Heart left ventricle (tissue), 16 donors: ENCODE measurements at regions of chrX and their contacts with region 1.

Region 1: DNA sequence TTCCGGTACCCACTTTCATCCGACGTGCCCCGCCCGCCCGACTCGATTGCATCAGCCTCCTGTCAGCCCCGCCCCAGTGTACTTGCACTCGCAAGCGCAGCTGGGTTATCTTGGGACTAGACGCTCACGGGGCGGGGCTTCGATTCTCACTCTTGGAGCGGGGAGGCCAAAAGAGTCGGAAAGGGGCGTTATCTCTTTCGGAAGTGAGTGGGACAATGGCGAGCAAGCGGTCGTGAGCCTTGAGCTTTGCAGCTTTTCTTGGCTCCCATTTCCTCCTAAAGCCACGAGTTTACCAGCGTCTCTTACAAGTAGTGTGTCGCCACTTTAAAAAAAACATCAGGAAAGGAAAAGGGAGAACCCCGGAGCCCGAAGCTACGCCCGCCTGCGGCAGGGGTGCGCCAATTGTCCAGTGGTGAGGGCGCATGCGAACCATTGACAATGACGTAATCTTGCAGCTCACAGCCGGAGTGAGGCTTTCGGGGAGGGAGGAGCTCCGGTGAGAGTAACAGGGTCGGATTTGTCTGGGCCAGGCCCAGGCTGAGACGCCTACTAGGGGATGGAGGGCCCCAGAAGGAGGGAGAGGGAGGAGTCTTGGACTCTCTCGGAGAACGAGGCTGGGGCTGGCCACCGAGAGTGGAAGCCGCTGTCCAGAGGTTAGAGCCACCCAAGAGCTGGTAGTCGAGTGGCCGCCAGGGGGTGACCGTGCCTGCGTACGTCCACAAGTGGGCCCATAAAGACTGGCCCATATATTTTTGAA is 109.5 kb downstream of the GNL3L start:
- DNase-seq: peak; percentile 93 to 97 (median 95)
- ATAC-seq: peak; percentile 97 to 99 (median 98)
- H3K4me3 ChIP-seq: peak overlapping the region in 11 of 12 donors; percentile 16 to 64 (median 51)
- H3K27ac ChIP-seq: peak overlapping the region; percentile 81 to 96 (median 91)
- H3K4me1 ChIP-seq: peaks cover 0 to 8% (median 0%) of the 10 kb centered on the region in 12 donors
- H3K27me3 ChIP-seq: no peaks in the 10 kb centered on the region
- CTCF ChIP-seq: peak; percentile 49 to 80 (median 62)
- POLR2A ChIP-seq: peak in 1 of 2 donors; percentile 51

Region 2: GRCh38 chrX:54540289-54540688 is 99.2 kb before region 1 on chrX:
- intact Hi-C with region 1: loop called in 1 of 10 experiments (anchors 10 kb)
- DNase-seq: peak in 4 of 5 donors; percentile 7 to 55 (median 39)
- ATAC-seq: peak; percentile 94 to 98 (median 96)
- H3K4me3 ChIP-seq: no peak overlapping the region
- H3K27ac ChIP-seq: peak overlapping the region in 9 of 12 donors; percentile 16 to 81 (median 63)
- H3K4me1 ChIP-seq: peaks cover 0 to 10% (median 0%) of the 10 kb centered on the region in 12 donors
- H3K27me3 ChIP-seq: no peaks in the 10 kb centered on the region
- CTCF ChIP-seq: peak in 5 of 12 donors; percentile 6 to 24 (median 14)
- POLR2A ChIP-seq: no peak

Region 3: DNA sequence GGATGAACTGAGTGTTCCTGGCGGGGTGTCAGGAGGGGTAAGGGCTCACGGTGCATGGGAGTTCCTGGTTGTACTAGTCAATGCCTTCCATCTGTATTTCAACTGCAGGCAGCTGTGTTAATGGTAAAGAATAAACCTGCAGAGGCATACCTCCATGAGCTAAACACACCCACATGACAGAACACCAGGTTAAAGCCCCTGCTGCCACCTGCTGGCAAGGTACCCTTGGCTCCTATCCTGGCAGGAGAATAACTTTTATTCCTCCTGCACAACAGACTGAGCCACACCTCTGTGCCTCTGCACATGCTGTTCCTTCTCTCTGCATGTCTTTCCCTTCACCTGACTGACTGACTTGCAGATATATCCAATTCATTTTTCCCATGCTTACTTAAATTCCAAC is 147.4 kb after region 1 on chrX:
- intact Hi-C with region 1: loop called in 1 of 10 experiments (anchors 10 kb)
- DNase-seq: no peak
- ATAC-seq: no peak
- H3K4me3 ChIP-seq: no peak overlapping the region
- H3K27ac ChIP-seq: no peak overlapping the region
- H3K4me1 ChIP-seq: no peaks in the 10 kb centered on the region
- H3K27me3 ChIP-seq: no peaks in the 10 kb centered on the region
- CTCF ChIP-seq: peak in 1 of 12 donors; percentile 8
- POLR2A ChIP-seq: no peak

Region 4: GRCh38 chrX:54808605-54809483 is 169.3 kb after region 1 on chrX:
- intact Hi-C with region 1: loop called in 5 of 10 experiments (anchors 2 to 10 kb)
- DNase-seq: peak; percentile 92 to 96 (median 94)
- ATAC-seq: peak; percentile 88 to 93 (median 90)
- H3K4me3 ChIP-seq: peak overlapping the region; percentile 46 to 99 (median 71)
- H3K27ac ChIP-seq: peak overlapping the region; percentile 78 to 98 (median 89)
- H3K4me1 ChIP-seq: peaks cover 0 to 18% (median 7%) of the 10 kb centered on the region in 12 donors
- H3K27me3 ChIP-seq: no peaks in the 10 kb centered on the region
- CTCF ChIP-seq: no peak
- POLR2A ChIP-seq: no peak

Region 5: DNA sequence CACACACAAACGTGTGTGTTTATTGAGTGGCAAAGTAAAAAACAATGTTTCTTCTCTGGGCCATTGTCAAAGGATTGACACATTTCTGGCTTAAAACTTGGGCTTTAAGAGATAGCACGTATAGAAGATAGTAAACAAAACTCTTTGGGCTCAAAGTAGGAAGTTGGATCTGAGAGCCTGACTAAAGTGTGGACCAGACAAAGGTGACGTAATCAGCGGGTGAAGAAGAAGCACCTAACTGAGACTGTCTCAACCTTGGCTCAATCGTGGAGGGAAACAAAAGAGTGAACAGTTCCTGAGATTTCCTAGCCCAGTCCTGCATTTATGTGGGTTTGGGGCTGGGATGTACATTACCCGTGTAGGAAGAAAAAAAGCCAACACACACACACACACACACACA is 340.8 kb after region 1 on chrX:
- intact Hi-C with region 1: loop called in 1 of 10 experiments (anchors 10 kb)
- DNase-seq: no peak
- ATAC-seq: no peak
- H3K4me3 ChIP-seq: no peak overlapping the region
- H3K27ac ChIP-seq: no peak overlapping the region
- H3K4me1 ChIP-seq: no peaks in the 10 kb centered on the region
- H3K27me3 ChIP-seq: peaks cover 0 to 7% (median 0%) of the 10 kb centered on the region in 9 donors
- CTCF ChIP-seq: no peak
- POLR2A ChIP-seq: no peak

Region 6: GRCh38 chrX:54999717-55000598 is 360.4 kb after region 1 on chrX and contains the start of gene APEX2:
- intact Hi-C with region 1: loop called in 3 of 10 experiments (anchors 2 to 10 kb)
- DNase-seq: peak; percentile 89 to 94 (median 94)
- ATAC-seq: peak; percentile 97 to 98 (median 98)
- H3K4me3 ChIP-seq: peak within 1 kb of the TSS; percentile 19 to 95 (median 66)
- H3K27ac ChIP-seq: peak within 1 kb of the TSS; percentile 68 to 95 (median 86)
- H3K4me1 ChIP-seq: peaks cover 0 to 17% (median 4%) of the 10 kb centered on the region in 12 donors
- H3K27me3 ChIP-seq: no peaks in the 10 kb centered on the region
- CTCF ChIP-seq: no peak
- POLR2A ChIP-seq: peak in 1 of 2 donors; percentile 70
- total RNA-seq, gene APEX2: 6.8 to 12.4 (median 8.6) TPM

Region 7: DNA sequence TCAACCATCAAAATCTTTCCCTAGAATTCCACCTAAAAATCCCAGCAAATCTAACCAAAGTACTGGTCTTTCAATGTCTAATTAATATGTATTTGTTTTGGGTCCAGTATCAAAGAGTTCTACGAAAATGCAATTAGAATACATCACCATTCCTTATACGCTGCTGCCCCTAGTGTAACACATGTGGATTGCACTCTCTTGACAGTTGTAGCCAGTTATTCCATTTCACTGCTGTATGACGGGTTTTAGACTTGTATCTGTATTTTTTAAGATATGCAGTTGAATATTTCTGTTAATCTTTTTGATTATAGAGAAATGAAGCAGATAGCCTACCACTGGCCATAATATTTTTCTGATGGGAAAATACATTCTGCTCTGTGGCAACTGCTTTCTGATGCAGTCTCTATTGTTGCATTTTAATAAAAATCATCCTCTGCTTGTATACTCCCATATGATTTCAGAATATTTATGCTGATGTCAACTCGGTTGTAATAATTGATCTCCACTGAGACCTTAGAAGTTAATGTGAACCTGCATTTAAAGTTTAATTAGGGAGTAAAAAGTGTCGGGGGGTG is 418.2 kb after region 1 on chrX:
- intact Hi-C with region 1: loop called in 4 of 10 experiments (anchors 5 to 10 kb)
- DNase-seq: peak in 1 of 5 donors; percentile 18
- ATAC-seq: peak in 3 of 4 donors; percentile 53 to 77 (median 66)
- H3K4me3 ChIP-seq: peak overlapping the region in 4 of 12 donors; percentile 18 to 42 (median 41)
- H3K27ac ChIP-seq: no peak overlapping the region
- H3K4me1 ChIP-seq: peaks cover 0 to 8% (median 0%) of the 10 kb centered on the region in 12 donors
- H3K27me3 ChIP-seq: peaks cover 0 to 10% (median 0%) of the 10 kb centered on the region in 9 donors
- CTCF ChIP-seq: peak; percentile 59 to 83 (median 72)
- POLR2A ChIP-seq: no peak